IMR-90 (cell line): ENCODE measurements at regions of chr4 and their contacts with region 1.

Region 1: DNA sequence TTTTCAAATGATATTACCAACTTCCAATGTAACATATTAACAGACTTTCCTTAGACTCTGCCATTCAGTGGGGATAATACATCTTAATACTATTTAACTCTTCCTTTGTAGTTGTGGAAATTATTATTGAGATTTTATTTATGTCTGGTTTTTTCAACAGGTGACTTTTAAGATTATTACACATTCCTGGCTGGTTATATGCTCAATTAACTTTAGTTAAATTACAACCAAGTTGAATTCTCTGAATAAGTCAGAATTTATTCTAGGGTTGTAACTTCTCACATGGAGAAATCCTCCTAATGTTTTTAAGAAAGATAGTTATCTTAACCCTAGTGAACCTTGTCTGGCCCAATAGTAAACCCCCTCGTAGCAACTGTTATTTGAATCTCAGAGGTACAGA is 107.3 kb downstream of the SLC10A6 start:
- DNase-seq: no peak
- ATAC-seq: no peak
- H3K4me3 ChIP-seq: no peak overlapping the region
- H3K27ac ChIP-seq: no peak overlapping the region
- H3K4me1 ChIP-seq: no peaks in the 10 kb centered on the region
- H3K27me3 ChIP-seq: no peaks in the 10 kb centered on the region
- CTCF ChIP-seq: no peak
- POLR2A ChIP-seq: no peak
- RAD21 ChIP-seq: no peak

Region 2: DNA sequence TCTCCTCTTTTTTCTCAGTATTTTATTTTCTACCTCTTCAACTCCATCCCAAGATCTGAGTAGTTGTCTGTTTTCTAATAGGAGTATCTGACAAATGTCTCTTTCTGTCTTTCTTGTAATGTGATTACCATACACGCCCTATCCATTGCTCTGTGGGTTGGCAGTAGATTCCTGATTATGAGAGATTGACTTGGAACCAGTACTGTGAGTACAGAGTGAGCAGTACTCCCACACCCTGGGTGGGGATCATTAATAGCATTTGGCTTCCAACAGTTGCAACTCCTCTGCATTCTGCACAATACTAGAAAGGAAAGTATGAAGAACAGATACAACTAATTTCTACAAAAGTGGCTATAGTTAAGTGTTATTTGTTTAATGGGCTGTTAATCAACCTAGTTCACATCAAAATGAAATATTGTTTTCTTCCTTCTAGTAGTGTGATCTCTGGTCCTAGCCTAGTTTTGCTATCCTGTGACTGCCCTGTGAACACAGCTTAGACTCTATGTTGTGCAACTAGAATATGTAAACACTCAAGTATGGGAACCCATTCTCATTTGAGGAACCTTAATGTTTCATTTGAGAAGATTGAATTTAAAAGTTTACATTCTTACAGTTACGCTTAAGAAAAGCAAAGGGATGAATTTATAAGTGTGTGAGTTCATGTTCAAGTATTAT is 34.8 kb before region 1 on chr4:
- CTCF ChIA-PET with region 1: no interaction called
- POLR2A ChIA-PET with region 1: no interaction called
- dilution Hi-C with region 1: no loop called
- in situ Hi-C with region 1: no loop called
- intact Hi-C with region 1: loop called (anchors 1 kb)
- DNase-seq: peak; percentile 11
- ATAC-seq: peak; percentile 75
- H3K4me3 ChIP-seq: no peak overlapping the region
- H3K27ac ChIP-seq: no peak overlapping the region
- H3K4me1 ChIP-seq: no peaks in the 10 kb centered on the region
- H3K27me3 ChIP-seq: no peaks in the 10 kb centered on the region
- CTCF ChIP-seq: no peak
- POLR2A ChIP-seq: no peak
- RAD21 ChIP-seq: no peak

Region 3: DNA sequence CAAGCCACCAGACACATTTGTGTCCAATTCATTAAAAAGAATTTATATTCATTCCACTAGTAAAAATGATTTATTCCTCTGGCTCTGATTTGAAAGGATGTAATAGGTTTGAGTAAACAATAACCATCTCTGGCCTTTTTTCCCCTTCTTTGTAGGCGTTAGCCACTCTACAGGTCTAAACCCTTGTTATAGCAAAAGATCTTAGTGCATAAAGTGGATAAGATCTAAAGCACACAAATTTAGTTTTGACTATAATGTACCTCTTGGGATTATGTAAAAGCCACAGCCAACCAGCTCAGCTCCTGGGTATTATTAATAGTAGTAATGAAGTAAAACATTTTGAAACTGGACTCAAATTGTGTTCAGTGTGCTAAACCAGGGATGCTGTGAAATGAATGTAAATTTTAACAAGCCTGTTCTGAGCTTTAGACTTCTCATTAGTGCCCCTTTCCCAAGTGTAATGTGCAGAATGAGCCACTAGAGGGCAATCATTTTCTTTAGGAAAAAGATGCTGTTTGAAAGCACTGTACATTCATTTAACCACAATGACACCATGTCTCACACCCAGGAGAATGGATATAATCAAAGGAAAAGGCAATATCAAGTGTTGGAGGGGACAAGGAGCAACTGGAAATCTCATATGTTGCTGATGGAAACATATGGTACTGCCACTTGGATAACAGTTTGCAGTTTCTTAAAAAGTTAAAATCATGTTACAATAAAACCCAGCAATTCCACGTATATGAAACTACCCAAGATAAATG is 408.8 kb after region 1 on chr4:
- CTCF ChIA-PET with region 1: no interaction called
- POLR2A ChIA-PET with region 1: no interaction called
- dilution Hi-C with region 1: no loop called
- in situ Hi-C with region 1: no loop called
- intact Hi-C with region 1: no loop called
- DNase-seq: peak; percentile 71
- ATAC-seq: peak; percentile 89
- H3K4me3 ChIP-seq: no peak overlapping the region
- H3K27ac ChIP-seq: no peak overlapping the region
- H3K4me1 ChIP-seq: no peaks in the 10 kb centered on the region
- H3K27me3 ChIP-seq: no peaks in the 10 kb centered on the region
- CTCF ChIP-seq: peak; percentile 82
- POLR2A ChIP-seq: no peak
- RAD21 ChIP-seq: peak; percentile 80

Region 4: GRCh38 chr4:87227751-87228151 is 485.9 kb after region 1 on chr4:
- CTCF ChIA-PET with region 1: no interaction called
- POLR2A ChIA-PET with region 1: no interaction called
- dilution Hi-C with region 1: no loop called
- in situ Hi-C with region 1: no loop called
- intact Hi-C with region 1: no loop called
- DNase-seq: no peak
- ATAC-seq: no peak
- H3K4me3 ChIP-seq: no peak overlapping the region
- H3K27ac ChIP-seq: no peak overlapping the region
- H3K4me1 ChIP-seq: no peaks in the 10 kb centered on the region
- H3K27me3 ChIP-seq: no peaks in the 10 kb centered on the region
- CTCF ChIP-seq: no peak
- POLR2A ChIP-seq: no peak
- RAD21 ChIP-seq: no peak